Activated CD8-positive, alpha-beta T cell treated with anti-CD3 and anti-CD28 coated beads for 36 hours (primary cell): ENCODE measurements at regions of chr6 and their contacts with region 1.

Region 1: GRCh38 chr6:29847871-29848630 is 20.4 kb downstream of the HLA-G start:
- DNase-seq: peak; percentile 90
- ATAC-seq: peak; percentile 78
- H3K4me3 Mint-ChIP-seq: no peak overlapping the region
- H3K27ac Mint-ChIP-seq: no peak overlapping the region
- H3K4me1 Mint-ChIP-seq: peaks cover 29% of the 10 kb centered on the region
- H3K27me3 Mint-ChIP-seq: peaks cover 46% of the 10 kb centered on the region
- CTCF ChIP-seq: peak; percentile 99

Region 2: GRCh38 chr6:29737707-29738630 is 110.1 kb before region 1 on chr6:
- CTCF ChIA-PET with region 1: no interaction called
- POLR2A ChIA-PET with region 1: no interaction called
- intact Hi-C with region 1: no loop called
- DNase-seq: peak; percentile 83
- ATAC-seq: peak; percentile 85
- H3K4me3 Mint-ChIP-seq: no peak overlapping the region
- H3K27ac Mint-ChIP-seq: no peak overlapping the region
- H3K4me1 Mint-ChIP-seq: peaks cover 11% of the 10 kb centered on the region
- H3K27me3 Mint-ChIP-seq: no peaks in the 10 kb centered on the region
- CTCF ChIP-seq: peak; percentile 84

Region 3: DNA sequence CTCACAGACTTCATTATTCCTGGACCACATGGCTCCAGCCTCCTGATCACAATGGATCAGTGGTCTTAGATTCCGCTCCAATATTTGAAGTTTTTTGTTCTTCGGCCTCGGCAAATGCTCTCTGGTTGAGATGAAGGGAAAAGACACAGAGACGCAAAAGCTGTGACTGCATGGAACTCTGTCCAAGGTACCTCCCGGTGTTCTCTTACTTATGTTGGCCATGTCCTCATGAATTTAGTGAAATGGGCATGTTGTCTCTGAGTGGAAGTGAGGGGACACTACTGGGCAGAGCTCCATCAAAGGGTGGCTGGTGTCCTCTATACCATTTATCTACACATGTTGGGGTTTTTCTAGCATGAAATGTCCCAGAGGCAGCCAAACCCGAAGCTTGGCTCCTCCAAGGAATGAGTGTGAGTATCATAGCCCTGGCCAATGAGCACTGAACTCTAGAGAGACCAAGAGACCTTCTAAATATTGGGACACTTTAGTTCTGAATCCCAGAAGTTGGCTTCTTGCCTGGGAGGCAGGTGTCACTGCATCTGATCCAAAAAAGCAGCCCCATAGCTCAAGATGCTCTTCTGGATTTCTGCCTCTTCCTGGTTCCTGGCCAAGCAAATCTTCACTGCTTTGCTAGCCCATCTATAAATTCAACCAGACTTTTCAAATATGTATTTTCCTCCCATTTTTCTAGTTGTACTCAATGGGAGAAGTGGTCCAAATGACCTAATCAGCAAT is 13.6 kb after region 1 on chr6:
- CTCF ChIA-PET with region 1: interaction called, 13 read pairs
- POLR2A ChIA-PET with region 1: interaction called, 5 read pairs
- intact Hi-C with region 1: no loop called
- DNase-seq: no peak
- ATAC-seq: no peak
- H3K4me3 Mint-ChIP-seq: no peak overlapping the region
- H3K27ac Mint-ChIP-seq: no peak overlapping the region
- H3K4me1 Mint-ChIP-seq: no peaks in the 10 kb centered on the region
- H3K27me3 Mint-ChIP-seq: peaks cover 35% of the 10 kb centered on the region
- CTCF ChIP-seq: no peak

Region 4: GRCh38 chr6:29872791-29873190 is 24.7 kb after region 1 on chr6:
- CTCF ChIA-PET with region 1: no interaction called
- POLR2A ChIA-PET with region 1: no interaction called
- intact Hi-C with region 1: no loop called
- DNase-seq: no peak
- ATAC-seq: no peak
- H3K4me3 Mint-ChIP-seq: no peak overlapping the region
- H3K27ac Mint-ChIP-seq: no peak overlapping the region
- H3K4me1 Mint-ChIP-seq: no peaks in the 10 kb centered on the region
- H3K27me3 Mint-ChIP-seq: peaks cover 11% of the 10 kb centered on the region
- CTCF ChIP-seq: no peak

Region 5: GRCh38 chr6:29964887-29965562 is 117.0 kb after region 1 on chr6:
- CTCF ChIA-PET with region 1: interaction called, 13 read pairs
- POLR2A ChIA-PET with region 1: interaction called, 4 read pairs
- intact Hi-C with region 1: loop called (anchors 5 kb)
- DNase-seq: peak; percentile 82
- ATAC-seq: peak; percentile 97
- H3K4me3 Mint-ChIP-seq: peak overlapping the region; percentile 57
- H3K27ac Mint-ChIP-seq: peak overlapping the region; percentile 83
- H3K4me1 Mint-ChIP-seq: peaks cover 26% of the 10 kb centered on the region
- H3K27me3 Mint-ChIP-seq: no peaks in the 10 kb centered on the region
- CTCF ChIP-seq: no peak

Region 6: DNA sequence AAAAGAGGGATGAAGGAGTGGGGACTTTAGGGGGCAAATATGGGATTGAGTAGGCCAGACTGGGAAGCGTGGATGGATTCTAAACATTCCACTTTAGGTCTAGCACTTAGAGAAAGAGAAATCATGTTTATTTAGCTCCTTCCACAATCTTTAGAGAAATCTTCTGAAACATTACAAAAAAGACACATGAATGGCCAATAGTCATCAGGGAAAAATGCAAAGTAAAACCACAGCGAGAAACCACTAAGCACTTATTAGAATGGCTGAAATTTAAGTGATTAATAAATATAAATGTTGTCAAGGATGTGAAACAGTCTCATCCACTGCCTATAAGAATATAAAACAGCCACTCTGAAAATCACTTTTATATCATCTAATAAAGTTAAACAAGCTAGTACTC is 141.2 kb after region 1 on chr6:
- CTCF ChIA-PET with region 1: interaction called, 15 read pairs
- POLR2A ChIA-PET with region 1: no interaction called
- intact Hi-C with region 1: no loop called
- DNase-seq: no peak
- ATAC-seq: no peak
- H3K4me3 Mint-ChIP-seq: no peak overlapping the region
- H3K27ac Mint-ChIP-seq: no peak overlapping the region
- H3K4me1 Mint-ChIP-seq: no peaks in the 10 kb centered on the region
- H3K27me3 Mint-ChIP-seq: no peaks in the 10 kb centered on the region
- CTCF ChIP-seq: no peak

Region 7: GRCh38 chr6:30013291-30013922 is 165.4 kb after region 1 on chr6:
- CTCF ChIA-PET with region 1: interaction called, 43 read pairs
- POLR2A ChIA-PET with region 1: no interaction called
- intact Hi-C with region 1: loop called (anchors 2 kb)
- DNase-seq: peak; percentile 11
- ATAC-seq: peak; percentile 45
- H3K4me3 Mint-ChIP-seq: no peak overlapping the region
- H3K27ac Mint-ChIP-seq: no peak overlapping the region
- H3K4me1 Mint-ChIP-seq: peaks cover 2% of the 10 kb centered on the region
- H3K27me3 Mint-ChIP-seq: no peaks in the 10 kb centered on the region
- CTCF ChIP-seq: peak; percentile 57